Cardiac septum (tissue), 1 donor: ENCODE measurements at regions of chr1 and their contacts with region 1.

Region 1: GRCh38 chr1:54121482-54122134 is 31.2 kb downstream of the CDCP2 start:
- DNase-seq: no peak

Region 2: DNA sequence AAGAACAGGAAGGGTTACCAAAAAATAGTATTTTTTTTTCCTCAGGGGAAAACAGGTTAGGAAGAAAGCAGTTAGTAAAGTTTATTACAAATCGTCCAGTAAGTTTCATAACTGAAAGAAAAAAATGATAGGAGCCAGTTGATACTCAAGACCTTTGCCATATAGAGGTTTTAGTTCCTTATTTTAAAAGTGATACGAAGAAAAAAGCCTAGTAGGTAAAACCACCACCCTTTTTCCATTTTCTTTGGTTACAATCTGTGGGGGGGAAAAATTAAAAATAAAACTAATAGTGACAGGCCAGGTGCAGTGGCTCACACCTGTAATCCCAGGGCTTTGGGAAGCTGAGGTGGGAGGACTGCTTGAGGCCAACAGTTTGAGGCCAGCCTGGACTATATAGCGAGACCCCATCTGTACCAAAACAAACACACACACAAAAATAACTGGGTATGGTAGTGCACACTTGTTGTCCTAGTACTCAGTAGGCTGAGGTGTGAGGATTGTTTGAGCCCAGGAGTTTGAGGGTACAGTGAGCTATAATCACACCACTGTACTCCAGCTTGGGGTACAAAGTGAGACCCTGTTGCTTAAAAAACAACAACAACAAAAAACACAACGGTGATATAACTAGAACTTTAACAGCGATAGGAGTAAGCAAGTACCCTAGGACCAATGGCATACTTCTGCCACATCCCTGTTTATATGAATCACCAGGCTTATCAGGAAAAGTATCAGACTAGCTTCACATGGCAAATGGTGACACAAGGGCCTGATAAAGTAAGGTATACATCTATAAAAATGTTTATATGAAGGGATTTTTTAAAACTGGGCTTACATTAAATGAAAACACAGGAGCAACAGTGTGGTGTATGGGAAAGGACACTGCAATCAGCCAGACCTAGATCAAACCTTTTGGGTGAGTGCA is 74.0 kb before region 1 on chr1:
- intact Hi-C with region 1: no loop called
- DNase-seq: no peak

Region 3: GRCh38 chr1:54070171-54070837 is 51.3 kb before region 1 on chr1:
- intact Hi-C with region 1: loop called (anchors 5 kb)
- DNase-seq: no peak

Region 4: GRCh38 chr1:54188291-54188690 is 66.7 kb after region 1 on chr1:
- intact Hi-C with region 1: no loop called
- DNase-seq: no peak

Region 5: GRCh38 chr1:54199765-54200518 is 78.3 kb after region 1 on chr1 and contains the starts of genes CYB5RL and MRPL37:
- intact Hi-C with region 1: loop called (anchors 5 kb)
- DNase-seq: peak; percentile 95
- total RNA-seq, gene CYB5RL: 5.7 TPM
- total RNA-seq, gene MRPL37: 71.7 TPM

Region 6: GRCh38 chr1:54273092-54273794 is 151.6 kb after region 1 on chr1:
- intact Hi-C with region 1: loop called (anchors 10 kb)
- DNase-seq: no peak